ENCODE measurements at regions of chr7 and their contacts with region 1.

Region 1: DNA sequence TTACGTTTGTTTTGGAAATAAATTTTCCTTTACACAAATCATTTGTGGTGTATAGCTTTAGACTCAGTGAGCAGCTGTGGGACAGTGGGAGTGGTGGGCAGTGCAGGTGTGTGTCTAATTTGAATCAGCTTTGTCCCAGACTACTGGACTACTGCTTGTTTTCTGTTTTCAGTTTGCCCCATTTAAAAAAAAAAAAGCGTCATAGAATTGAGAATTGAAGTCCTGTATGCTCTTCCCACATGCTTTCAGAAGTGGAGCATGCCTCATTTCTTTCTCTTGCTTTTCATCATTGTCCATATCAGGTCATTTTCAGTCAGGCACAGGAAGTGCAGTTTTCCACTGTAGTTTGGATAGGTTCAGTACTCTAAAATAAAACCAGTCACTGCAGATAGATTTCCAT is 66.1 kb downstream of the SHH start:
- DNase-seq: peak; percentile 33
- H3K4me3 Mint-ChIP-seq: no peak overlapping the region
- H3K27ac Mint-ChIP-seq: peak overlapping the region; percentile 70
- H3K4me1 Mint-ChIP-seq: peaks cover 59% of the 10 kb centered on the region
- H3K27me3 Mint-ChIP-seq: no peaks in the 10 kb centered on the region

Region 2: DNA sequence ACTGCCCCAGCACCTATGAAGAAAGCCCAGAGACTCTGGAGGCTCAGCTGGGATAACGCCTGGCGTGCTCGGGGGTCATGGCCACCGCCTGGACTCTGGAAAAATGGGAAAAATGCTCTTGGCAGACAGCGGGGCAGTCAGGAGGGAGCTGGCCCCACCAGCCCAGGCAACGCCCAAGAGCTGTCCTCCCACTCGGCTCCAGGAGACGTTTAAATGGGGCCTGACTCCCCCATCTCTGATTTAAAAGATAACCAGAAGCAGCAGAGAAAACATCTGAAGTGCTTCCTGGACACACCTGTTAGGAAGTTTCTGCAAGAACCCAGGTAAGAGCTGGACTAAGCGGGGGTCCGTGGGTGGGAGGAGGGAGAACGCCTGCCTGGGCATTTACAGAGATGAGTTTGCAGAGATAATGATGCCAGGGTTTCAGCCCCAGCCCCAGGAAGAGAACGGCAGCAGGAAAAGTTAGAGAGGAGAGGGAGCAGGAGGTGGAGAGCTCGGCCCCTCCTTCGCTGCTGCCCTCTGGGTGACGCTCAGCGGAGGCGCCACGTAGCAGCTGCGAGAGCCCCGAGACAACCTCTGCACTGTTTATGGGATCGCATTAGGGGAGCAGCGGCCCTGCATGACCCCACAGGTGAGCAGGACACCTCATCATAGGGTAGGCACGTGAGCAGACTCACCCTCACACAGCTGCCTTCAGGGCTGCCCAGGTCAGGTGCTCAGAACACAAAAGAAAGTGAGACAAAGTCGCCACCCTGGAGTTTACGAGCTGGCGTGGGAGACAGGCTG is 532.0 kb before region 1 on chr7:
- CTCF ChIA-PET with region 1: no interaction called
- POLR2A ChIA-PET with region 1: no interaction called
- intact Hi-C with region 1: no loop called
- DNase-seq: no peak
- H3K4me3 Mint-ChIP-seq: no peak overlapping the region
- H3K27ac Mint-ChIP-seq: no peak overlapping the region
- H3K4me1 Mint-ChIP-seq: peaks cover 29% of the 10 kb centered on the region
- H3K27me3 Mint-ChIP-seq: peaks cover 5% of the 10 kb centered on the region

Region 3: GRCh38 chr7:155729834-155730233 is 16.4 kb before region 1 on chr7:
- CTCF ChIA-PET with region 1: interaction called, 7 read pairs
- POLR2A ChIA-PET with region 1: interaction called, 5 read pairs
- intact Hi-C with region 1: loop called (anchors 1 kb)
- DNase-seq: no peak
- H3K4me3 Mint-ChIP-seq: no peak overlapping the region
- H3K27ac Mint-ChIP-seq: no peak overlapping the region
- H3K4me1 Mint-ChIP-seq: peaks cover 31% of the 10 kb centered on the region
- H3K27me3 Mint-ChIP-seq: no peaks in the 10 kb centered on the region

Region 4: GRCh38 chr7:155763691-155764437 is 17.7 kb after region 1 on chr7:
- CTCF ChIA-PET with region 1: interaction called, 26 read pairs
- POLR2A ChIA-PET with region 1: interaction called, 3 read pairs
- intact Hi-C with region 1: loop called (anchors 1 kb)
- DNase-seq: peak; percentile 80
- H3K4me3 Mint-ChIP-seq: peak overlapping the region; percentile 76
- H3K27ac Mint-ChIP-seq: peak overlapping the region; percentile 99
- H3K4me1 Mint-ChIP-seq: peaks cover 52% of the 10 kb centered on the region
- H3K27me3 Mint-ChIP-seq: no peaks in the 10 kb centered on the region

Region 5: GRCh38 chr7:155769701-155770100 is 23.5 kb after region 1 on chr7:
- CTCF ChIA-PET with region 1: interaction called, 26 read pairs
- POLR2A ChIA-PET with region 1: interaction called, 3 read pairs
- intact Hi-C with region 1: loop called (anchors 1 kb)
- DNase-seq: no peak
- H3K4me3 Mint-ChIP-seq: no peak overlapping the region
- H3K27ac Mint-ChIP-seq: peak overlapping the region; percentile 18
- H3K4me1 Mint-ChIP-seq: peaks cover 7% of the 10 kb centered on the region
- H3K27me3 Mint-ChIP-seq: no peaks in the 10 kb centered on the region

Region 6: DNA sequence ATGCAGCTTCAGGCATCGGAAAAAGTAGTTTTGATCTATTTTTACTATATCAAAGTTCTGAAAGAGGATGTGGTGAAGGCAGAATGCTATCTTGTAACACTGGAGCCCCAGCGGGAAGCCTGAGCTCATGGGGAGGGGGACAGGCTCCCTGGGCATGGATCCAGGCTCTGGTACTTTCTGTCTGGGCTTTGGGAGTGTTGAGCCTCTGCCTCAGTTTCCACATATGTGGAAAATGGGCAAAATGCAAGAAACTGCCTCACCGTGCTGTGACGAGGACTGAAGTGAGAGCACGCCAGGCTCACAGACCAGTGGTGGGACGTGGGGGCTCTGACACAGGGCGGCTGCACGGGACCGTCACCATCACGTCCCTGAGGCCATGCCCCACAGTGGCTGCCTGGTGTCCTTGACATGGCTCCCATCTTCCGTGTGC is 249.0 kb after region 1 on chr7:
- CTCF ChIA-PET with region 1: no interaction called
- POLR2A ChIA-PET with region 1: no interaction called
- intact Hi-C with region 1: no loop called
- DNase-seq: no peak
- H3K4me3 Mint-ChIP-seq: no peak overlapping the region
- H3K27ac Mint-ChIP-seq: no peak overlapping the region
- H3K4me1 Mint-ChIP-seq: peaks cover 33% of the 10 kb centered on the region
- H3K27me3 Mint-ChIP-seq: peaks cover 44% of the 10 kb centered on the region

Region 7: GRCh38 chr7:156014201-156014600 is 268.0 kb after region 1 on chr7:
- CTCF ChIA-PET with region 1: no interaction called
- POLR2A ChIA-PET with region 1: no interaction called
- intact Hi-C with region 1: no loop called
- DNase-seq: no peak
- H3K4me3 Mint-ChIP-seq: no peak overlapping the region
- H3K27ac Mint-ChIP-seq: no peak overlapping the region
- H3K4me1 Mint-ChIP-seq: no peaks in the 10 kb centered on the region
- H3K27me3 Mint-ChIP-seq: no peaks in the 10 kb centered on the region

Measured in activated CD4-positive, alpha-beta memory T cell treated with anti-CD3 and anti-CD28 coated beads for 36 hours (primary cell).